ENCODE measurements at regions of chr18 and their contacts with region 1.

Region 1: GRCh38 chr18:49849331-49850217 is 36.2 kb upstream of the ACAA2 start:
- DNase-seq: peak in 1 of 3 donors; percentile 18
- ATAC-seq: peak; percentile 21 to 65 (median 32)
- H3K4me3 ChIP-seq: no peak overlapping the region
- H3K27ac ChIP-seq: no peak overlapping the region
- H3K4me1 ChIP-seq: peaks cover 0 to 5% (median 0%) of the 10 kb centered on the region in 4 donors
- H3K27me3 ChIP-seq: no peaks in the 10 kb centered on the region
- CTCF ChIP-seq: no peak
- POLR2A ChIP-seq: no peak

Region 2: GRCh38 chr18:49510393-49511115 is 339.0 kb before region 1 on chr18:
- intact Hi-C with region 1: loop called in 1 of 2 experiments (anchors 10 kb)
- DNase-seq: peak in 2 of 3 donors; percentile 44 to 59
- ATAC-seq: peak; percentile 77 to 83 (median 81)
- H3K4me3 ChIP-seq: no peak overlapping the region
- H3K27ac ChIP-seq: no peak overlapping the region
- H3K4me1 ChIP-seq: peaks cover 0 to 4% (median 0%) of the 10 kb centered on the region in 4 donors
- H3K27me3 ChIP-seq: no peaks in the 10 kb centered on the region
- CTCF ChIP-seq: peak; percentile 72 to 90 (median 86)
- POLR2A ChIP-seq: no peak

Region 3: DNA sequence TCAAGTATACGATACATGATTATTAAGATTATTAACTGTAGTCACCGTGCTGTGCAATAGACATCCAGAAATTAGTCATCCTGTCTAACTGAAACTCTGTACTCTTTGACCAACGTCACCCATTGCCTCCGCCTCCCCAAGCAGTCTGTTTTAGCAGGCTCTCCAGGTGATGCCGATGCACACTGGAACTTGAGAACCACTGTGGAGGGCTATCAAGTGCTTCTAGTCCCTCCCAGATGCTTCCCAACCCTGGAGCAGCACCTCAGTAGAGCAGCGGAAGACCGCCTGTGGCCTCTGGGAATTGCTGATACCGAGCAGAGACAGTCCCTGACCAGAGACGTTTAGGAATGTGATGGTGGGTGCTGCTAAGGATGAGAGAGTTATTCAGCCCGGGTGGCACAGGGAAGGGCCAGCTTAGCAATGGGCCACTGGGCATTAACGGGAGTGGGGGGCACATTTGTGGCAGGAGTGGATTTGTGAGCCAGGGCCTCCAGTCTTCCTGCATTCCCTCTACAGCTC is 237.0 kb before region 1 on chr18:
- intact Hi-C with region 1: no loop called
- DNase-seq: no peak
- ATAC-seq: no peak
- H3K4me3 ChIP-seq: no peak overlapping the region
- H3K27ac ChIP-seq: no peak overlapping the region
- H3K4me1 ChIP-seq: no peaks in the 10 kb centered on the region
- H3K27me3 ChIP-seq: no peaks in the 10 kb centered on the region
- CTCF ChIP-seq: no peak
- POLR2A ChIP-seq: no peak

Region 4: GRCh38 chr18:49944663-49945062 is 95.1 kb after region 1 on chr18:
- intact Hi-C with region 1: no loop called
- DNase-seq: no peak
- ATAC-seq: peak; percentile 41 to 67 (median 50)
- H3K4me3 ChIP-seq: no peak overlapping the region
- H3K27ac ChIP-seq: no peak overlapping the region
- H3K4me1 ChIP-seq: no peaks in the 10 kb centered on the region
- H3K27me3 ChIP-seq: no peaks in the 10 kb centered on the region
- CTCF ChIP-seq: peak in 2 of 4 donors; percentile 20 to 31
- POLR2A ChIP-seq: no peak

Measured in right lobe of liver (tissue), 6 donors.